Endothelial cell of umbilical vein (primary cell): ENCODE measurements at regions of chr4 and their contacts with region 1.

Region 1: GRCh38 chr4:168183717-168184608 is 91.6 kb downstream of the ANXA10 start:
- DNase-seq: peak; percentile 65
- H3K4me3 ChIP-seq: no peak overlapping the region
- H3K27ac ChIP-seq: no peak overlapping the region
- H3K4me1 ChIP-seq: peaks cover 3% of the 10 kb centered on the region
- H3K27me3 ChIP-seq: no peaks in the 10 kb centered on the region
- CTCF ChIP-seq: peak; percentile 18 to 22
- POLR2A ChIP-seq: no peak

Region 2: GRCh38 chr4:168631241-168632162 is 447.5 kb after region 1 on chr4:
- CTCF ChIA-PET with region 1: interaction called, 5 read pairs
- POLR2A ChIA-PET with region 1: no interaction called
- dilution Hi-C with region 1: no loop called
- intact Hi-C with region 1: loop called (anchors 1 kb)
- DNase-seq: peak; percentile 72
- H3K4me3 ChIP-seq: peak overlapping the region; percentile 38 to 77 (median 51)
- H3K27ac ChIP-seq: peak overlapping the region; percentile 42
- H3K4me1 ChIP-seq: peaks cover 27% of the 10 kb centered on the region
- H3K27me3 ChIP-seq: no peaks in the 10 kb centered on the region
- CTCF ChIP-seq: peak; percentile 28 to 59
- POLR2A ChIP-seq: no peak

Region 3: DNA sequence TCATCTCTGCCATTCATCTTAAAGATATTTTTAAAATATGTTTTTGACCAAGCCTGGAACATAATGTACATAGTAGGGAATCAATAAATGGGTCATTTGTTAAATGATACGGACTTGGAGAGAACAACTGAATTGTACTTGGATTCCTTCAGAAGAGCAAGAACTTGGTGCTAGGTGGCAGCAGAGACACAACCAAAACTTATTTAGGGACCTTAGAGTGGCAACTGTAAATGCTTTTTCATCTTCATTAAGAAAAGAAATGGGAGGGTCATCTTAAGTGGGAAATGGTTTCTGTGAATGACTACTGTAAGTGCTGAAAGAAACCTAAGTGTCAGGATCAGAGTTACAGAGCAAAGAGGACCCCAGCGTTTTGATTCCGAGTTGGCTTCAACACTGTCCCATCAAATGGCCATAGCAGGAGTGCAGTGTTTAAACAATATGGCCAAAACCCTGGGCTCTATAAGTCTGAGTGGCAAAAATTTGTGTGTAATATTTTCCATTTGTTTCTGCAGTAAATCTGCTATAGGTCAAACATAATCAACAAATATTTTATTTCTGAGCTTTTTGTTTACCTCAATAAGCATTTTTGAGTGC is 526.5 kb after region 1 on chr4:
- CTCF ChIA-PET with region 1: no interaction called
- POLR2A ChIA-PET with region 1: no interaction called
- dilution Hi-C with region 1: no loop called
- intact Hi-C with region 1: loop called (anchors 5 kb)
- DNase-seq: peak; percentile 82
- H3K4me3 ChIP-seq: no peak overlapping the region
- H3K27ac ChIP-seq: no peak overlapping the region
- H3K4me1 ChIP-seq: peaks cover 12% of the 10 kb centered on the region
- H3K27me3 ChIP-seq: no peaks in the 10 kb centered on the region
- CTCF ChIP-seq: peak; percentile 36 to 48
- POLR2A ChIP-seq: no peak

Region 4: GRCh38 chr4:168923526-168924194 is 739.7 kb after region 1 on chr4:
- CTCF ChIA-PET with region 1: interaction called, 15 read pairs
- POLR2A ChIA-PET with region 1: no interaction called
- dilution Hi-C with region 1: no loop called
- intact Hi-C with region 1: loop called (anchors 1 kb)
- DNase-seq: peak; percentile 67
- H3K4me3 ChIP-seq: no peak overlapping the region
- H3K27ac ChIP-seq: no peak overlapping the region
- H3K4me1 ChIP-seq: no peaks in the 10 kb centered on the region
- H3K27me3 ChIP-seq: no peaks in the 10 kb centered on the region
- CTCF ChIP-seq: peak; percentile 57 to 66
- POLR2A ChIP-seq: no peak